Mammary epithelial cell (primary cell): ENCODE measurements at regions of chr1 and their contacts with region 1.

Region 1: GRCh38 chr1:203625628-203626019 is 1.0 kb upstream of the ATP2B4 start:
- DNase-seq: peak; percentile 88
- H3K4me3 ChIP-seq: no peak overlapping the region
- H3K27ac ChIP-seq: peak overlapping the region; percentile 95
- H3K4me1 ChIP-seq: peaks cover 34% of the 10 kb centered on the region
- H3K27me3 ChIP-seq: no peaks in the 10 kb centered on the region
- CTCF ChIP-seq: peak in 1 of 2 donors; percentile 7

Region 2: GRCh38 chr1:203512830-203513611 is 112.6 kb before region 1 on chr1:
- CTCF ChIA-PET with region 1: no interaction called
- dilution Hi-C with region 1: no loop called
- in situ Hi-C with region 1: loop called in 1 of 2 experiments (anchors 5 kb)
- intact Hi-C with region 1: loop called (anchors 2 kb)
- DNase-seq: peak; percentile 86
- H3K4me3 ChIP-seq: no peak overlapping the region
- H3K27ac ChIP-seq: peak overlapping the region; percentile 73
- H3K4me1 ChIP-seq: peaks cover 27% of the 10 kb centered on the region
- H3K27me3 ChIP-seq: no peaks in the 10 kb centered on the region
- CTCF ChIP-seq: no peak

Region 3: GRCh38 chr1:203607533-203607873 is 18.1 kb before region 1 on chr1:
- CTCF ChIA-PET with region 1: no interaction called
- dilution Hi-C with region 1: no loop called
- in situ Hi-C with region 1: no loop called
- intact Hi-C with region 1: loop called (anchors 2 kb)
- DNase-seq: no peak
- H3K4me3 ChIP-seq: no peak overlapping the region
- H3K27ac ChIP-seq: no peak overlapping the region
- H3K4me1 ChIP-seq: peaks cover 11% of the 10 kb centered on the region
- H3K27me3 ChIP-seq: no peaks in the 10 kb centered on the region
- CTCF ChIP-seq: no peak

Region 4: DNA sequence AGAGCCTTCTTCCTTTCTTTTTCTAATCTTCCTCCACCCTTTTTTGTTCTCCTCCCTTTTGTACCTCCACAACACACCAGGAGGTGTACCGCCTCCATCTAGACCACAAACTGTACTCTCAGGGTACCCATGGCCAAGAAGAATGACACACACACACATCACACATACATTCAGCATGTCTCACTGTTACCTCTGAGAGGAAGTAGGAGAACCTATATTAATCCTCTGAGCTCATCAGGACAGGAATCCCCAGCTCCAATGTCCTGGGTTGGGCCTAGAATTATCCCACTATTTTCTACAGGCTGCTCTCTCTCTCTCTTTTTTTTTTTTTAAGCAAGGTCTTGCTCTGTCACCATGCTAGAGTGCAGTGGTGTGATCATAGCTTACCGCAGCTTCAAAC is 37.7 kb after region 1 on chr1:
- CTCF ChIA-PET with region 1: interaction called, 4 read pairs
- dilution Hi-C with region 1: no loop called
- in situ Hi-C with region 1: no loop called
- intact Hi-C with region 1: loop called (anchors 1 kb)
- DNase-seq: peak; percentile 100
- H3K4me3 ChIP-seq: no peak overlapping the region
- H3K27ac ChIP-seq: peak overlapping the region; percentile 97
- H3K4me1 ChIP-seq: peaks cover 34% of the 10 kb centered on the region
- H3K27me3 ChIP-seq: no peaks in the 10 kb centered on the region
- CTCF ChIP-seq: peak; percentile 10 to 42

Region 5: GRCh38 chr1:203702130-203702577 is 76.5 kb after region 1 on chr1:
- CTCF ChIA-PET with region 1: interaction called, 3 read pairs
- dilution Hi-C with region 1: loop called (anchors 5 kb)
- in situ Hi-C with region 1: loop called in 1 of 2 experiments (anchors 5 kb)
- intact Hi-C with region 1: loop called (anchors 1 kb)
- DNase-seq: peak; percentile 37
- H3K4me3 ChIP-seq: no peak overlapping the region
- H3K27ac ChIP-seq: no peak overlapping the region
- H3K4me1 ChIP-seq: peaks cover 18% of the 10 kb centered on the region
- H3K27me3 ChIP-seq: no peaks in the 10 kb centered on the region
- CTCF ChIP-seq: peak; percentile 79 to 80